GM12878 (cell line): ENCODE measurements at regions of chr11 and their contacts with region 1.

Region 1: GRCh38 chr11:61173456-61173855 is 12.2 kb upstream of the VPS37C start:
- DNase-seq: no peak
- ATAC-seq: peak; percentile 69
- H3K4me3 ChIP-seq: no peak overlapping the region
- H3K27ac ChIP-seq: no peak overlapping the region
- H3K4me1 ChIP-seq: peaks cover 5% of the 10 kb centered on the region
- H3K27me3 ChIP-seq: no peaks in the 10 kb centered on the region; a peak in 1 of 4 replicates
- CTCF ChIP-seq: peak in 1 of 3 experiments; percentile 21; a peak in 2 of 6 replicates
- EP300 ChIP-seq: no peak
- POLR2A ChIP-seq: no peak
- RAD21 ChIP-seq: peak; percentile 51; the same call in 1 of the 2 replicates

Region 2: DNA sequence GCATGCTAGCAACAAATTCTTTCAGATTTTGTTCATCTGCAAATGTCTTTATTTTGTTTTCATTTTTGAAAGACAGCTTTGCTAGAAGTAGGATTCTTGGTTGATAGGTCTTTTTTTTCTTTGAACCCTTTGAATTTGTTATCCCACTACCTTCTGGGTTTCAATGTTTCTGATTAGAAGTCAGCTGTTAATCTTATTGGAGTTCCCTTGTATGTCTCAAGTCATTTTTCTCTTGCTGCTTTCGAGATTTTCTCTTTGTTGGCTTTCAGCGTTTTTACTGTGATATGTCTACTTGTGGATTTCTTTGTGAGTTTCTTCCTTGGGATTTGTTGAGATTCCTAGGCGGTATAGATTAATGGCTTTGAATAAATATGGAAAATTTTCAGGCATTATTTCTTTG is 501.2 kb before region 1 on chr11:
- CTCF ChIA-PET with region 1: no interaction called
- POLR2A ChIA-PET with region 1: no interaction called
- RAD21 ChIA-PET with region 1: no interaction called
- SMC1A ChIA-PET with region 1: no interaction called
- in situ Hi-C with region 1: no loop called
- intact Hi-C with region 1: no loop called
- DNase-seq: no peak
- ATAC-seq: no peak
- H3K4me3 ChIP-seq: no peak overlapping the region
- H3K27ac ChIP-seq: no peak overlapping the region
- H3K4me1 ChIP-seq: no peaks in the 10 kb centered on the region
- H3K27me3 ChIP-seq: no peaks in the 10 kb centered on the region
- CTCF ChIP-seq: no peak
- EP300 ChIP-seq: no peak
- POLR2A ChIP-seq: no peak
- RAD21 ChIP-seq: no peak

Region 3: DNA sequence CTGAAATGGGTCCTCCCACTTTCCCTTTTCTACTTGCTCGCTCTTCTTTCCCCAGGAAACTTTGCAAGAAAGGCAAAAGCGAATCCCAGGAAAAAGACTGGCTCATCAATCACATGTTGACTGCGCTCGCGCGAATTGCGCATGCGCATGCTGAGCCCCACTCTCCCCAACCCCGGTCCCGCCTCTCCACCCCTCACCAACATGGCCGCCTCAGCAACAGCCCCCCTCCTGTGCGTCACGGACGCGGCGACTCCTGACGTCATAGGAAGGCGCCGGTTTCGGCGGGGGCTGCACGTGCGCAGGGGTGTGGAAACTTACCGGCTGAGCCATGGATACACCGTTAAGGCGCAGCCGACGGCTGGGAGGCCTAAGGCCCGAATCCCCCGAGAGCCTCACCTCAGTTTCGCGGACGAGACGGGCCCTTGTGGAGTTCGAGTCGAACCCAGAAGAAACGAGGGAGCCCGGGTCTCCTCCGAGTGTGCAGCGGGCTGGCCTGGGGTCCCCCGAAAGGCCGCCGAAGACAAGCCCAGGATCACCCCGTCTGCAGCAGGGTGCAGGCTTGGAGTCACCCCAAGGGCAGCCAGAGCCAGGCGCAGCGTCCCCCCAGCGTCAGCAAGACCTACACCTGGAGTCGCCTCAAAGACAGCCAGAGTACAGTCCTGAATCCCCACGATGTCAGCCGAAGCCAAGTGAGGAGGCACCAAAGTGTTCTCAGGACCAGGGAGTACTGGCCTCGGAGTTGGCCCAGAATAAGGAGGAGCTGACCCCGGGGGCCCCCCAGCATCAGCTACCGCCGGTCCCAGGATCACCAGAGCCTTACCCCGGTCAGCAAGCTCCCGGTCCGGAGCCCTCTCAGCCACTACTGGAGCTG is 331.4 kb before region 1 on chr11 and contains the start of gene CCDC86:
- CTCF ChIA-PET with region 1: no interaction called
- POLR2A ChIA-PET with region 1: no interaction called
- RAD21 ChIA-PET with region 1: no interaction called
- SMC1A ChIA-PET with region 1: no interaction called
- in situ Hi-C with region 1: no loop called
- intact Hi-C with region 1: no loop called
- DNase-seq: peak; percentile 78
- ATAC-seq: peak; percentile 87
- H3K4me3 ChIP-seq: peak within 1 kb of the TSS; percentile 92
- H3K27ac ChIP-seq: peak within 1 kb of the TSS; percentile 72
- H3K4me1 ChIP-seq: peaks cover 4% of the 10 kb centered on the region
- H3K27me3 ChIP-seq: no peaks in the 10 kb centered on the region
- CTCF ChIP-seq: no peak
- EP300 ChIP-seq: peak in 1 of 2 experiments; percentile 18; a peak in 1 of 4 replicates
- POLR2A ChIP-seq: peak; percentile 73
- RAD21 ChIP-seq: no peak
- polyA plus RNA-seq, gene CCDC86: 2.0 to 4.4 TPM

Region 4: DNA sequence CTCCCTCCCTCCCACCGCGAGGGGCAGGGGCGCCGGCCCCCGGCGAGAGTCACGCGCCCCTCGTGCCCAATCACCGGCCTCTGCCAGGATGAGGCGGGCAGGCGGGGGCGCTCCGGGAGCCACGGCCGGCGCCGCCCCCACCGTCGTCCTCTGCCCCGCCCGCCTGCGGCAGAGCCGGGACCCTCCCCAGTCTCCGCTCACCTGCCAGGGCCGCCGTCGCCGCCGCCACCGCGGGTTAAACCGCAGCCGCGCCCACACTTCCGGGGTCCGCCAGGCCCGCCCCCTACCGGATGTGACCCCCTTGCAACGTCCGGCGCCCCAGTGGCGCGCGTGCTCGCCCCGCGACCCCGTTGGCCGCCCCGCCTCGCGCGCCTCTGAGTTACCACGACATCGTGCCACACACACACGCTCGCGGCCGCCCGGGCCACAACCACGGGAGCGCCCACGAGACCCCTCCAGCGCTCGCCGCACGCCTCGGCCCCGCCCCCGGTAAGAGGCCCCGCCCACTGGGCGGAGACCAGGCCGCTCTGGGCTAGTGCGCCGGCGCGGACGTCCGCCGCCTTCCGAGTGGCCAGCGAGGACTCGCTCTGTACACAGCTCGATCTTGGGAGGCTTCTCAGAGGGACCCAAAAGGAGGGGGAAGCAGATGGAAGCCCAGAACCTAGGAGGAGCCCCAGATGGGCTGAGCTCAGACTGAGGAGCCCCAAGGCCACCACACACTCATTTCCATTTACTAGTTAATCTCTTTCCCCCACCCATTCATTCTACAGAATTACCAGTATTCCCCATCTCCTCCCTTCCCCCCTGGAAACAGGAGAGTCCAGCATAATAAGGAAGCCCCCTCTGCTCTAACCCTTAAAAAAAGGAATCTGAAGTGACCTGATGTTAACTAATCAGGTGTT is 12.0 kb before region 1 on chr11 and contains the start of gene VPS37C:
- CTCF ChIA-PET with region 1: interaction called, 7 read pairs
- POLR2A ChIA-PET with region 1: interaction called, 17 read pairs
- RAD21 ChIA-PET with region 1: interaction called, 8 read pairs
- SMC1A ChIA-PET with region 1: interaction called, 31 read pairs
- in situ Hi-C with region 1: no loop called
- intact Hi-C with region 1: no loop called
- DNase-seq: peak; percentile 71
- ATAC-seq: peak; percentile 80
- H3K4me3 ChIP-seq: peak within 1 kb of the TSS; percentile 86
- H3K27ac ChIP-seq: peak within 1 kb of the TSS; percentile 96
- H3K4me1 ChIP-seq: peaks cover 39% of the 10 kb centered on the region
- H3K27me3 ChIP-seq: no peaks in the 10 kb centered on the region
- CTCF ChIP-seq: no peak
- EP300 ChIP-seq: peak in 1 of 2 experiments; percentile 27; a peak in 1 of 4 replicates
- POLR2A ChIP-seq: peak; percentile 86
- RAD21 ChIP-seq: no peak
- polyA plus RNA-seq, gene VPS37C: 0.39 to 0.88 TPM

Region 5: DNA sequence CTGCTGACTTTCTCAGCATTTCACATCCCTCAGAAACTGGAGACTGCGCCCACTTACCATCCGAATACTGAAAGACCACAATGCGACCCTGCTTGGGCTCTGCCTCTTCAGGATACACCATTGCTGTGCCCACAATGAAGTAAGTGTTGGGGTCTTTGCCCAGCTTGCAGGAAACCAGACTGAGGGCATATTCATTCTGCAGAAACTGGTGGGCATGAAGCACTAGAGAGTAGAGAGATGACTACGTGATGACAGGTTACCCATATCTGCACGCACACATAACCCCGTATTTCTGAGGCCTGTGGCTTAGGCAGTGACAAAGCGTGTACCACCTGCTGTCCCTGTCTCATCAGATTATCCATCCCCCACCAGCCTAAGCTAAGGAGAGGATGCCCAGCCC is 136.3 kb after region 1 on chr11:
- CTCF ChIA-PET with region 1: no interaction called
- POLR2A ChIA-PET with region 1: no interaction called
- RAD21 ChIA-PET with region 1: no interaction called
- SMC1A ChIA-PET with region 1: no interaction called
- in situ Hi-C with region 1: no loop called
- intact Hi-C with region 1: no loop called
- DNase-seq: no peak
- ATAC-seq: no peak
- H3K4me3 ChIP-seq: no peak overlapping the region
- H3K27ac ChIP-seq: no peak overlapping the region
- H3K4me1 ChIP-seq: no peaks in the 10 kb centered on the region
- H3K27me3 ChIP-seq: no peaks in the 10 kb centered on the region
- CTCF ChIP-seq: no peak
- EP300 ChIP-seq: no peak
- POLR2A ChIP-seq: no peak; the same call in 1 of the 2 replicates
- RAD21 ChIP-seq: no peak

Region 6: DNA sequence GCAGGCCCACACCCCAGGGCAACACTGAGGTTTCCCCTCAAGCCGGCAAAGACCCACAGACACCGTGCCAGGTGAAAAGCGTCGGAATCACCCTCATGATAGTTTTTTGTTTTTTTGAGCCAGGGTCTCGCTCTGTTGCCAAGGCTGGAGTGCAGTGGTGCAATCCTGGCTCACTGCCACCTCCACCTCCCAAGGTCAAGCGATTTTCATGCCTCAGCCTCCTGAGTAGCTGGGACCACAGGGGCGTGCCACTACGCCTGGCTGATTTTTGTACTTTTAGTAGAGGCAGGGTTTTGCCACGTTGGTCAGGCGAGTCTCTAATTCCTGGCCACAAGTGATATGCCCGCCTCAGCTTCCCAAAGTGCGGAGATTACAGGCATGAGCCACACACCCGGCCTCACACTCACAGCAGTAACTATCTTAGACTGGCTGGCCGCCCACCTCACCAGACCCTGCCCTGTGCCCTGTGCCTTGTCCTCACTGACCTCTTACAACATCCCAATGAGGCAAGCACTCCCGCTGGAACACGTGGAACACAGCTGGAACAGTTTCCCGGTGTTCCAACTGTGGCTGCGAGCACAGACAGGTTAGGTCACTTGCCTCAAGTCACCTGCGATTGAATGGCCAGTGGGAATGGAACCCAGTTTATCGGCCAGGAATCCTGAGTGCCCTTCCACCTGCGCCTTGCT is 356.2 kb after region 1 on chr11:
- CTCF ChIA-PET with region 1: no interaction called
- POLR2A ChIA-PET with region 1: no interaction called
- RAD21 ChIA-PET with region 1: no interaction called
- SMC1A ChIA-PET with region 1: no interaction called
- in situ Hi-C with region 1: no loop called
- intact Hi-C with region 1: no loop called
- DNase-seq: no peak
- ATAC-seq: no peak
- H3K4me3 ChIP-seq: no peak overlapping the region
- H3K27ac ChIP-seq: no peak overlapping the region
- H3K4me1 ChIP-seq: no peaks in the 10 kb centered on the region
- H3K27me3 ChIP-seq: peaks cover 0 to 4% of the 10 kb centered on the region in 2 experiments; a peak in 2 of 4 replicates
- CTCF ChIP-seq: no peak
- EP300 ChIP-seq: no peak
- POLR2A ChIP-seq: no peak
- RAD21 ChIP-seq: no peak